CD4-positive, alpha-beta T cell (primary cell): ENCODE measurements at regions of chrX and their contacts with region 1.

Region 1: GRCh38 chrX:40735325-40736169 is at the start of gene MED14:
- DNase-seq: peak; percentile 80 to 96 (median 90)
- ATAC-seq: peak; percentile 88
- H3K4me3 ChIP-seq: peak within 1 kb of the TSS; percentile 65
- H3K4me3 Mint-ChIP-seq: peak within 1 kb of the TSS; percentile 97
- H3K27ac ChIP-seq: peak within 1 kb of the TSS; percentile 86 to 92
- H3K27ac Mint-ChIP-seq: peak within 1 kb of the TSS; percentile 98
- H3K4me1 ChIP-seq: peaks cover 9% of the 10 kb centered on the region
- H3K4me1 Mint-ChIP-seq: peaks cover 69% of the 10 kb centered on the region
- H3K27me3 ChIP-seq: no peaks in the 10 kb centered on the region
- H3K27me3 Mint-ChIP-seq: no peaks in the 10 kb centered on the region
- CTCF ChIP-seq: peak; percentile 38
- total RNA-seq, gene MED14: 59.9 to 67.7 TPM

Region 2: DNA sequence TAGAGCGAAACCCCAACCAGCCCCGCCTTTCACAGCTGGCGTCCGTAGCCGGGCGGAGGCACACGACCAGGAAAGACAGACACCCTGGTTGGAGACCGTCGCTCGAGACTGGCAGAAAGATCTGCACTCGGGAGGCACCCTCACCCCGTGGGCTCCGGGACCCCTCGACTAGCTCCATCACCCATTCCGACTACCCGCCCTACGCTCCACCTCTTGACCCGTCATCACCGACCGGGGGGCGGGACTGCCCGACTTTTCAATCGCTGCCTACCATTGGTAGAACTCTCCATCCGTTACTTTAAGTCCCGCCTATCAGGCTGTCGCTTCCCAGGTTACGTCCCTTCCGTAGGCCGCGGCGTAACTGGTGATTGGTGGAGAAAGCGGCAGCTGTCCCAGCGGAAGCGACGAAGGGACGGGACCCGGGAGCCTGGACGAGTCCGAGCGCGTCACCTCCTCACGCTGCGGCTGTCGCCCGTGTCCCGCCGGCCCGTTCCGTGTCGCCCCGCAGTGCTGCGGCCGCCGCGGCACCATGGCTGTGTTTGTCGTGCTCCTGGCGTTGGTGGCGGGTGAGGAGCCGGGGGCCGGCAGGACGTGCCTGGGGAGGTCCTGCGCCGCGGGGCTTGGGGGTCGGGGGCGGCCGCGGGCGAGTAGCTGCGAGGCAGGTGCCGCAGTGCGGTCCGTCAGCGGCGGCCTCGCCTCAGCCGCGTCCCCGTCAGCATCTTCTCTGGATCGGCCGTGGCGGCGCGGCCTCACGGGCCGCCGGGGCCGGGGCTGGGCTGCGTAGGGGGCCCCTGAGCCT is 154.8 kb before region 1 on chrX and contains the start of gene ATP6AP2:
- CTCF ChIA-PET with region 1: no interaction called
- POLR2A ChIA-PET with region 1: interaction called, 10 read pairs
- intact Hi-C with region 1: loop called in 1 of 2 experiments (anchors 5 kb)
- DNase-seq: peak; percentile 75 to 95 (median 84)
- ATAC-seq: peak; percentile 94
- H3K4me3 ChIP-seq: peak within 1 kb of the TSS; percentile 83
- H3K4me3 Mint-ChIP-seq: peak within 1 kb of the TSS; percentile 94
- H3K27ac ChIP-seq: peak within 1 kb of the TSS; percentile 79 to 89
- H3K27ac Mint-ChIP-seq: peak within 1 kb of the TSS; percentile 89
- H3K4me1 ChIP-seq: peaks cover 17% of the 10 kb centered on the region
- H3K4me1 Mint-ChIP-seq: peaks cover 32% of the 10 kb centered on the region
- H3K27me3 ChIP-seq: no peaks in the 10 kb centered on the region
- H3K27me3 Mint-ChIP-seq: no peaks in the 10 kb centered on the region
- CTCF ChIP-seq: no peak
- total RNA-seq, gene ATP6AP2: 73.8 to 78.7 TPM

Region 3: DNA sequence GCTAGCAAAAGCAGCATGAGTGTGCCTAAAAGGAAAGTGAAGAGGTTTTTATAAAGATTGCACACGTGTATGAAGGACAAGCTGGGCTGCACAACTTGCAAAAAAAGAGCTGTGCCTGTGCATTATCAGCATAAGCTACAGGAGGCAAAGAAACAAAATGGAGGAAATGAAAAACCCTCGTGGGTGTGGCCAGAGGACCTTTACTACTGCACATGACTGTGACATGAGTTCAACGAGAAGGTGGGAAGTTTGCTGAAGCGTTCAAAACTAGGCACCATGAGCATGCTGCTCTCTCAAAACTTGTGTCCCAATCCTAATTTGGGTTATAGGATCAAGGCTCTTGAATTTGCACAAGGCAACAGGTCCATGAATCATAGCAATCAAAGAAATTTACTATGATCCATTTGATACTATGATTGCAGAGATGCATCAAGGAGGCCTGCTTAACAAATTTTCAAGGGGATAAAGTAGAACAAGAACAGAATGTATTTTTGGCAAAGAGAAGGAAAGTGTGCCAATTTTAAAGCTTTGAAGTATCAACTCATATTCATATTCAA is 50.1 kb before region 1 on chrX:
- CTCF ChIA-PET with region 1: interaction called, 3 read pairs
- POLR2A ChIA-PET with region 1: no interaction called
- intact Hi-C with region 1: loop called in 1 of 2 experiments (anchors 10 kb)
- DNase-seq: no peak
- ATAC-seq: no peak
- H3K4me3 ChIP-seq: no peak overlapping the region
- H3K4me3 Mint-ChIP-seq: no peak overlapping the region
- H3K27ac ChIP-seq: no peak overlapping the region
- H3K27ac Mint-ChIP-seq: peak overlapping the region; percentile 42
- H3K4me1 ChIP-seq: no peaks in the 10 kb centered on the region
- H3K4me1 Mint-ChIP-seq: peaks cover 23% of the 10 kb centered on the region
- H3K27me3 ChIP-seq: no peaks in the 10 kb centered on the region
- H3K27me3 Mint-ChIP-seq: no peaks in the 10 kb centered on the region
- CTCF ChIP-seq: no peak

Region 4: DNA sequence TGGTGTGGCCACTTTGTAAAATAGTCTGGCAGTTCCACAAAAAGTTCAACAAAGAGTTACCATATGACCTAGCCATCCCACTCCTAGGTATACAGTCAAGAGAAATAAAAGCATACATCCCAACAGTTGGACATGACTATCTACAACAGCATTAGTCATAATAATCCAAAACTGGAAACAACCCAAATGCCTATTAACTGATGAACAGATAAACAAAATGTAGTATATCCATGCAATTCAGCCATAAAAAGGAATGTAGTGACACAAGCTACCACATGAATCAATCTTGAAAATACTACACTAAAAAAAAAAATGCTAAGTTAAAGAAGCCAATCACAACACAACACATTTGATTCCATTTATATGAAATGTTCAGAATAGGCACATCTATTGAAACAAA is 16.3 kb before region 1 on chrX:
- CTCF ChIA-PET with region 1: interaction called, 6 read pairs
- POLR2A ChIA-PET with region 1: interaction called, 18 read pairs
- intact Hi-C with region 1: no loop called
- DNase-seq: no peak
- ATAC-seq: no peak
- H3K4me3 ChIP-seq: no peak overlapping the region
- H3K4me3 Mint-ChIP-seq: no peak overlapping the region
- H3K27ac ChIP-seq: no peak overlapping the region
- H3K27ac Mint-ChIP-seq: peak overlapping the region; percentile 19
- H3K4me1 ChIP-seq: peaks cover 7% of the 10 kb centered on the region
- H3K4me1 Mint-ChIP-seq: peaks cover 75% of the 10 kb centered on the region
- H3K27me3 ChIP-seq: no peaks in the 10 kb centered on the region
- H3K27me3 Mint-ChIP-seq: no peaks in the 10 kb centered on the region
- CTCF ChIP-seq: no peak

Region 5: GRCh38 chrX:40749681-40750494 is 14.3 kb after region 1 on chrX:
- CTCF ChIA-PET with region 1: no interaction called
- POLR2A ChIA-PET with region 1: interaction called, 17 read pairs
- intact Hi-C with region 1: no loop called
- DNase-seq: peak in 3 of 14 experiments; percentile 9 to 11 (median 9)
- ATAC-seq: no peak
- H3K4me3 ChIP-seq: no peak overlapping the region
- H3K4me3 Mint-ChIP-seq: peak overlapping the region; percentile 23
- H3K27ac ChIP-seq: peak overlapping the region in 1 of 2 donors; percentile 22
- H3K27ac Mint-ChIP-seq: peak overlapping the region; percentile 79
- H3K4me1 ChIP-seq: peaks cover 5% of the 10 kb centered on the region
- H3K4me1 Mint-ChIP-seq: peaks cover 16% of the 10 kb centered on the region
- H3K27me3 ChIP-seq: no peaks in the 10 kb centered on the region
- H3K27me3 Mint-ChIP-seq: no peaks in the 10 kb centered on the region
- CTCF ChIP-seq: no peak

Region 6: DNA sequence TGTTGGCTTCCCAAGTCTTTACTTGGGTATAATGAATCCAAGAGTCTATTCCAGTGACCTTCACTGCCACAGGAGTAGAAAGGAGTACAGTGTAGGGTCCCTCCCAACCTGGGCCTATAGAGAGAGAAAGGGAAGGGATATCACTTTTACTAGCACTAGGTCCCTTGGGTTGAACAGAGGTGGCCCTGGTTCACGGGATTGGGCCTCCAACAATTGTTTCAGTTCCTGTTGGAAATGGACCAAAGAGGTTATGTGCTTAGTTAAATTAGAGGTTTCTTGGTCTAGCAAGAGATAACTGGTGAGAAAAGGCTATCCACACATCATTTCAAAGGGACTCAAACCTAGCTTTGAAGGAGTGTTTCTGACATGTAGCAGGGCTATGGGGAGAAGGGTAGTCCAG is 56.9 kb after region 1 on chrX:
- CTCF ChIA-PET with region 1: interaction called, 7 read pairs
- POLR2A ChIA-PET with region 1: no interaction called
- intact Hi-C with region 1: loop called (anchors 5 to 10 kb)
- DNase-seq: no peak
- ATAC-seq: no peak
- H3K4me3 ChIP-seq: no peak overlapping the region
- H3K4me3 Mint-ChIP-seq: no peak overlapping the region
- H3K27ac ChIP-seq: no peak overlapping the region
- H3K27ac Mint-ChIP-seq: no peak overlapping the region
- H3K4me1 ChIP-seq: peaks cover 5% of the 10 kb centered on the region
- H3K4me1 Mint-ChIP-seq: peaks cover 5% of the 10 kb centered on the region
- H3K27me3 ChIP-seq: no peaks in the 10 kb centered on the region
- H3K27me3 Mint-ChIP-seq: no peaks in the 10 kb centered on the region
- CTCF ChIP-seq: no peak